Endothelial cell of umbilical vein (primary cell): ENCODE measurements at regions of chr2 and their contacts with region 1.

Region 1: GRCh38 chr2:10398496-10398895 is 49.6 kb downstream of the ODC1 start:
- DNase-seq: no peak
- H3K4me3 ChIP-seq: no peak overlapping the region
- H3K27ac ChIP-seq: no peak overlapping the region
- H3K4me1 ChIP-seq: peaks cover 35% of the 10 kb centered on the region
- H3K27me3 ChIP-seq: no peaks in the 10 kb centered on the region
- CTCF ChIP-seq: no peak
- POLR2A ChIP-seq: no peak

Region 2: DNA sequence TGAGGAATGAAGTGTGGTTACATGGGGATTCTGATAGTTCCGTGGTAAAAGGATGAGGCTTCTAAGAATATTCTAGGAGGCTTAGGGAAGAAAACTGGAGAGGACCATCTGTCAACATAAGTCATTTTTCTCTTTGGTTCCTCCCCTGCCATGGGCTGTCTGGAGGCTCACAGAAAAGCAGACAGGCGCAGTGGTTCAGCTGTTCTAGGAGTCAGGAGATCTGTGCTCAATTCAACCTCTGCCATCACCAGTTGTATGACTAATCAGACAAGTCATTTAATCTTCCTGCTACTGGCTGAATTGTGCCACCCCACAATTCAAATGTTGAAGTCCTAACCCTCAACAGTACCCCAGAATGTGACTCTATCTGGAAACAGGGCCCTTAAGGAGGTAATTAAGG is 879.2 kb before region 1 on chr2:
- CTCF ChIA-PET with region 1: no interaction called
- POLR2A ChIA-PET with region 1: no interaction called
- dilution Hi-C with region 1: no loop called
- intact Hi-C with region 1: loop called (anchors 5 kb)
- DNase-seq: no peak
- H3K4me3 ChIP-seq: no peak overlapping the region
- H3K27ac ChIP-seq: no peak overlapping the region
- H3K4me1 ChIP-seq: no peaks in the 10 kb centered on the region
- H3K27me3 ChIP-seq: no peaks in the 10 kb centered on the region
- CTCF ChIP-seq: no peak
- POLR2A ChIP-seq: no peak

Region 3: GRCh38 chr2:10285556-10286198 is 112.8 kb before region 1 on chr2:
- CTCF ChIA-PET with region 1: no interaction called
- POLR2A ChIA-PET with region 1: no interaction called
- dilution Hi-C with region 1: no loop called
- intact Hi-C with region 1: loop called (anchors 1 kb)
- DNase-seq: peak; percentile 79
- H3K4me3 ChIP-seq: no peak overlapping the region
- H3K27ac ChIP-seq: peak overlapping the region; percentile 22
- H3K4me1 ChIP-seq: peaks cover 31% of the 10 kb centered on the region
- H3K27me3 ChIP-seq: no peaks in the 10 kb centered on the region
- CTCF ChIP-seq: peak in 1 of 2 donors; percentile 2
- POLR2A ChIP-seq: no peak